ENCODE measurements at regions of chr7 and their contacts with region 1.

Region 1: DNA sequence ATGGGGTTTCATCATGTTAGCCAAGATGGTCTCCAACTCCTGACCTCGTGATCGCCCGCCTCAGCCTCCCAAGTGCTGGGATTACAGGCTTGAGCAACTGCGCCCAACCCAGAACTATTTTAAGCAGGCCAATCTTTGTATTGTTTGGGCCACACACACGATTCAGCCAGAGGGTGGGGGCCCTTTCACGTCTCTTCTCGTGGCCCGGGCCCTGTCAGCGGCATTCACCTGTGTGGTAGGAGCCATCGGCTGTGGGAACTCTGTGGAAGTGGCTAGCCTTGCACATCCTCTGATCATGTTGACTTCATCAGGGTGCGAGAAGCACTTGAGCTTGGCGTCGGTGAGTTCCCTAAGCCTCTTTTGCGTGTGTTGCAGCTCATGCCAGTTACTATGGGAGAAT is 16.9 kb downstream of the SUN1 start:
- DNase-seq: no peak
- ATAC-seq: no peak
- H3K4me3 ChIP-seq: no peak overlapping the region
- H3K27ac ChIP-seq: no peak overlapping the region
- H3K4me1 ChIP-seq: no peaks in the 10 kb centered on the region
- H3K27me3 ChIP-seq: no peaks in the 10 kb centered on the region
- CTCF ChIP-seq: no peak
- POLR2A ChIP-seq: no peak
- RAD21 ChIP-seq: no peak

Region 2: DNA sequence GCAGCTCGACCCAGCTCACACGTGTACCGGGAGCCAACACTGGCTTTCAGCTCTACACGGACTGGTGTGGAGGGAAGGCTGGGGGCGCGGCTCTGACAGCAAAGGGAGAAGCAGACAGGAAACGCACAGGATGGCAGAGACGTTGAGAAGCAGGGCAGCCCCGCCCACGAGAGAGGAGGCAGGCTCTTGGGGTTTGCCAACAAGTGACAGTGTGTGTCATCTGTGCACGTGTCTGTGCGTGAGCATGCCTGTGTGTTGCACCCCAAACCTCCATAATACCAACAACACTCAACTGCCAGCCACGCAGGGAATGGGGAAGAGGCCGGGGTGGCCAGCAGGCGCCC is 265.1 kb before region 1 on chr7:
- CTCF ChIA-PET with region 1: no interaction called
- POLR2A ChIA-PET with region 1: no interaction called
- dilution Hi-C with region 1: no loop called
- in situ Hi-C with region 1: no loop called
- intact Hi-C with region 1: no loop called
- DNase-seq: no peak
- ATAC-seq: no peak
- H3K4me3 ChIP-seq: no peak overlapping the region
- H3K27ac ChIP-seq: no peak overlapping the region
- H3K4me1 ChIP-seq: peaks cover 10% of the 10 kb centered on the region
- H3K27me3 ChIP-seq: no peaks in the 10 kb centered on the region
- CTCF ChIP-seq: no peak
- POLR2A ChIP-seq: no peak
- RAD21 ChIP-seq: no peak

Region 3: DNA sequence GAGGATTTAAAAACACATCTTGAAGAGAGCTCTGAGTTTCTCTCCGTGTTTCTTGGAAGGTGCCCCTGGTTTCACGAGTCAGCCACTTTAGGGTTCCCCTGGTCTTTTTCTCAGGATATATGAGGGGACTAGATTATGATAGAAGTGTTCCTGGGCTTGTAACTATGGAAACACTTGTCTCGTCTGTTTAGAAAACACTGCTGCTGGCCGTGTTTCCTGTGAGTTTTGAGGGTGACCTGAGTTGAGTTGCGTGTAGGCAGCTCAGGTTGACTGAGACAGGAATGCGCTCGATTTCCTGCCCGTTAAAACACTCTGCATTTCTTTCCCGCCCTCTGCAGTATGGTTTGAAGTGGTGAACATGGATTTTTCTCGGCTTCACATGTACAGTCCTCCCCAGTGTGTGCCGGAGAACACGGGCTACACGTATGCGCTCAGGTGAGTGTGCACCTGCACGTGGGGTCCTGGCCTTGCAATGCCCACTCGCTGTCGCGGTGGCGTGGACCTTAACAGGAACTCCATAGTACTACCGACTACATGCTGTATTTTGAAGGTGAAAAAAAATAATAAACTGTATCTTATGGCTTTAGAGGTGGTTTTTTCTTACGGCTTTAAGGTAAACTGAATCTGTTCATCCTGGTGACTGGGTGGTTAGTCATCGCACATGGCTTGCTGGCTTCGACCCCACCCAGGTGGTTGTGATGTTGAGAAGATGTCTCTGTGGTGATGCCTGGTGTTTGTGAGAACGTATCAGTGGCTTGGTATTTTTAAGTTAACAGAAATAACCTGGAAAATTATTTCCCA is 16.8 kb before region 1 on chr7 and contains the start of gene SUN1:
- CTCF ChIA-PET with region 1: interaction called, 12 read pairs
- POLR2A ChIA-PET with region 1: no interaction called
- dilution Hi-C with region 1: no loop called
- in situ Hi-C with region 1: no loop called
- intact Hi-C with region 1: no loop called
- DNase-seq: peak; percentile 88
- ATAC-seq: peak; percentile 22
- H3K4me3 ChIP-seq: no peak within 1 kb of the TSS
- H3K27ac ChIP-seq: peak within 1 kb of the TSS; percentile 52; the same call in 1 of the 2 replicates
- H3K4me1 ChIP-seq: peaks cover 22% of the 10 kb centered on the region
- H3K27me3 ChIP-seq: no peaks in the 10 kb centered on the region
- CTCF ChIP-seq: no peak
- POLR2A ChIP-seq: no peak
- RAD21 ChIP-seq: no peak
- total RNA-seq, gene SUN1: 113 and 129 TPM in 2 replicates

Measured in IMR-90 (cell line).